CD4-positive, alpha-beta T cell (primary cell): ENCODE measurements at regions of chr16 and their contacts with region 1.

Region 1: GRCh38 chr16:25224731-25225319 is 8.1 kb downstream of the AQP8 start:
- DNase-seq: no peak
- ATAC-seq: no peak
- H3K4me3 ChIP-seq: no peak overlapping the region
- H3K4me3 Mint-ChIP-seq: no peak overlapping the region
- H3K27ac ChIP-seq: no peak overlapping the region
- H3K27ac Mint-ChIP-seq: no peak overlapping the region
- H3K4me1 ChIP-seq: peaks cover 2% of the 10 kb centered on the region
- H3K4me1 Mint-ChIP-seq: no peaks in the 10 kb centered on the region
- H3K27me3 ChIP-seq: no peaks in the 10 kb centered on the region
- H3K27me3 Mint-ChIP-seq: no peaks in the 10 kb centered on the region
- CTCF ChIP-seq: no peak

Region 2: GRCh38 chr16:24943473-24943872 is 281.4 kb before region 1 on chr16:
- CTCF ChIA-PET with region 1: no interaction called
- POLR2A ChIA-PET with region 1: no interaction called
- intact Hi-C with region 1: loop called in 1 of 2 experiments (anchors 10 kb)
- DNase-seq: no peak
- ATAC-seq: no peak
- H3K4me3 ChIP-seq: no peak overlapping the region
- H3K4me3 Mint-ChIP-seq: no peak overlapping the region
- H3K27ac ChIP-seq: no peak overlapping the region
- H3K27ac Mint-ChIP-seq: no peak overlapping the region
- H3K4me1 ChIP-seq: no peaks in the 10 kb centered on the region
- H3K4me1 Mint-ChIP-seq: no peaks in the 10 kb centered on the region
- H3K27me3 ChIP-seq: no peaks in the 10 kb centered on the region
- H3K27me3 Mint-ChIP-seq: no peaks in the 10 kb centered on the region
- CTCF ChIP-seq: no peak

Region 3: DNA sequence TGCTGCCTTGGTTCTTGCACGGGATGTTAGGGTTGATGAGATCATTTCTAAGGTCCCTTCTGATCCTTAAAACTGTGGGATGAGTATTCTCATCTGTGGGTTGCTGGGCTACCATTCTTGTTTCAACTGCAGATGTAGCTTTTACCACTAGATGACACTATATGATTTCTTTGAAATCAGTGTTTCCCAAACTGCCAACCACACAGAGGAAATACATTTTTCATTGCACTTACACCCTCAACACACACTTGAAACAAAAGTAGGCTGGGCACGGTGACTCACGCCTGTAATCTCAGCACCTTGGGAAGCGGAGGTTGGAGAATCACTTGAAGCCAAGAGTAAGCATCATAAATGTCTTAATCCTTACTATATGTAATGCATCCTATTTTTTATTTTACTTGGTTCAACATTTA is 98.0 kb before region 1 on chr16:
- CTCF ChIA-PET with region 1: interaction called, 10 read pairs
- POLR2A ChIA-PET with region 1: no interaction called
- intact Hi-C with region 1: loop called (anchors 2 kb)
- DNase-seq: peak in 6 of 14 experiments; percentile 5 to 64 (median 50)
- ATAC-seq: peak; percentile 74
- H3K4me3 ChIP-seq: no peak overlapping the region
- H3K4me3 Mint-ChIP-seq: no peak overlapping the region
- H3K27ac ChIP-seq: no peak overlapping the region
- H3K27ac Mint-ChIP-seq: peak overlapping the region; percentile 9
- H3K4me1 ChIP-seq: peaks cover 15% of the 10 kb centered on the region
- H3K4me1 Mint-ChIP-seq: peaks cover 39% of the 10 kb centered on the region
- H3K27me3 ChIP-seq: no peaks in the 10 kb centered on the region
- H3K27me3 Mint-ChIP-seq: no peaks in the 10 kb centered on the region
- CTCF ChIP-seq: peak; percentile 63

Region 4: DNA sequence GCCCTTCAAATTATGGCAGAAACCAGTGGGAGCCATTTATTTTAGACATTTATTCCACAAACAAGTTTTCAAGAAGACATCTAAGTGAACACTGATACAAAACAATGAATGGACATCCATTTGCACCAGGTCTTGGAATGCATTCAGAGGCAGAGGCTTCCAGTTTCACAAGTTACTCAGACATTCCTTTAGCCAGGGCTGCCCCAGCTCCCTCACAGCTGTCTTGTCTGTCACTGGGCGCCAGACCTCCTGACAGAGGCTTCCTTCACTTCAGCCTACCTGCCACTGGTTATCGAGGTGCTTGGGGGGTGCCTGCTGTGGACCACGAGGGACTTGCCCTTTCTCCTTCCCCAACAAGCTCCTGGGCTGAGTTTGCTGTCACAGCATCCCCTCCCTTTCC is 11.2 kb after region 1 on chr16:
- CTCF ChIA-PET with region 1: interaction called, 19 read pairs
- POLR2A ChIA-PET with region 1: no interaction called
- intact Hi-C with region 1: no loop called
- DNase-seq: no peak
- ATAC-seq: no peak
- H3K4me3 ChIP-seq: no peak overlapping the region
- H3K4me3 Mint-ChIP-seq: no peak overlapping the region
- H3K27ac ChIP-seq: no peak overlapping the region
- H3K27ac Mint-ChIP-seq: no peak overlapping the region
- H3K4me1 ChIP-seq: no peaks in the 10 kb centered on the region
- H3K4me1 Mint-ChIP-seq: peaks cover 6% of the 10 kb centered on the region
- H3K27me3 ChIP-seq: no peaks in the 10 kb centered on the region
- H3K27me3 Mint-ChIP-seq: no peaks in the 10 kb centered on the region
- CTCF ChIP-seq: no peak